MCF 10A (cell line): ENCODE measurements at regions of chr1 and their contacts with region 1.

Region 1: DNA sequence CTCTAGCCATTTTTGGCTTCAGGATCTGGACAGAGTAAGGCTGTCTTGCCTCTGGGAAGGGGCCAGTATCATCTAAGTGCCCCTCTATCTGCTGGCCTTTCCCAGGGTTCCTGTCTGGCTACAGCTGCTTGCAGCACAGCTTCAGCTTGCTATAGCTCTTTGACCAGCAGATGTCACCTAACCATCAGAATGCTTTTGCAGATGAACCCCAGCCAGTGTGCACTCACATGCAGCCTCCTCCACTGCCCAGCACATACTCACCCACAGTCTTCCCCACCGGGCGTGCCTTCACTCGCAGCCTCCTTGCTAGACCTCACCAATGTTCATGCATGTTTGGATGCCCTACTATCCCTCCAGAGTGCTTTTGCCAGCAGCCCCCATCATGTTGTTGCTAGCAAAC is 769.0 kb downstream of the BRINP3 start:
- DNase-seq: peak; percentile 35
- H3K4me3 Mint-ChIP-seq: no peak overlapping the region
- H3K27ac Mint-ChIP-seq: no peak overlapping the region
- H3K4me1 Mint-ChIP-seq: no peaks in the 10 kb centered on the region
- H3K27me3 Mint-ChIP-seq: no peaks in the 10 kb centered on the region
- CTCF ChIP-seq: peak; percentile 16

Region 2: DNA sequence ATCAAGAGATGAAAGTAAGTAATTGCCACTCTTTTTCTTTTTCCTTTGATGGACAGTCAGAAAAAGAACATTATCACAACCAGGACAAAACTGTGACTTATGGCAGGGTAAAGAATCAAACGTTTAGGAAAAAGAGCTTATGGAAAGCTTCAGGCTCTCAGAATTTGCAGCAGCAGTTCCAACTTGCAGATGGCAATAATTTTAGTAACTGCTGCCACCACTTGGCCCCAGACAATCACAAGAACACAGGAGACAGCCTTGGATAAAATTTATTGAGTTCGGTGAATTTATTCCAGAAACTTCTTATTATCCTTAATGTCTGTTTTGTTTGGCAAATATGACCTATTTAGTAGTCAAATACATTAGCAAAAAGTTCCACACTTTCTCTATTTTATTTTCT is 35.5 kb before region 1 on chr1:
- CTCF ChIA-PET with region 1: no interaction called
- POLR2A ChIA-PET with region 1: no interaction called
- intact Hi-C with region 1: no loop called
- DNase-seq: no peak
- H3K4me3 Mint-ChIP-seq: no peak overlapping the region
- H3K27ac Mint-ChIP-seq: no peak overlapping the region
- H3K4me1 Mint-ChIP-seq: no peaks in the 10 kb centered on the region
- H3K27me3 Mint-ChIP-seq: no peaks in the 10 kb centered on the region
- CTCF ChIP-seq: no peak

Region 3: GRCh38 chr1:189693140-189693539 is 15.5 kb before region 1 on chr1:
- CTCF ChIA-PET with region 1: interaction called, 11 read pairs
- POLR2A ChIA-PET with region 1: no interaction called
- intact Hi-C with region 1: no loop called
- DNase-seq: peak; percentile 16
- H3K4me3 Mint-ChIP-seq: no peak overlapping the region
- H3K27ac Mint-ChIP-seq: no peak overlapping the region
- H3K4me1 Mint-ChIP-seq: no peaks in the 10 kb centered on the region
- H3K27me3 Mint-ChIP-seq: no peaks in the 10 kb centered on the region
- CTCF ChIP-seq: no peak